H1 (cell line): ENCODE measurements at regions of chr5 and their contacts with region 1.

Region 1: DNA sequence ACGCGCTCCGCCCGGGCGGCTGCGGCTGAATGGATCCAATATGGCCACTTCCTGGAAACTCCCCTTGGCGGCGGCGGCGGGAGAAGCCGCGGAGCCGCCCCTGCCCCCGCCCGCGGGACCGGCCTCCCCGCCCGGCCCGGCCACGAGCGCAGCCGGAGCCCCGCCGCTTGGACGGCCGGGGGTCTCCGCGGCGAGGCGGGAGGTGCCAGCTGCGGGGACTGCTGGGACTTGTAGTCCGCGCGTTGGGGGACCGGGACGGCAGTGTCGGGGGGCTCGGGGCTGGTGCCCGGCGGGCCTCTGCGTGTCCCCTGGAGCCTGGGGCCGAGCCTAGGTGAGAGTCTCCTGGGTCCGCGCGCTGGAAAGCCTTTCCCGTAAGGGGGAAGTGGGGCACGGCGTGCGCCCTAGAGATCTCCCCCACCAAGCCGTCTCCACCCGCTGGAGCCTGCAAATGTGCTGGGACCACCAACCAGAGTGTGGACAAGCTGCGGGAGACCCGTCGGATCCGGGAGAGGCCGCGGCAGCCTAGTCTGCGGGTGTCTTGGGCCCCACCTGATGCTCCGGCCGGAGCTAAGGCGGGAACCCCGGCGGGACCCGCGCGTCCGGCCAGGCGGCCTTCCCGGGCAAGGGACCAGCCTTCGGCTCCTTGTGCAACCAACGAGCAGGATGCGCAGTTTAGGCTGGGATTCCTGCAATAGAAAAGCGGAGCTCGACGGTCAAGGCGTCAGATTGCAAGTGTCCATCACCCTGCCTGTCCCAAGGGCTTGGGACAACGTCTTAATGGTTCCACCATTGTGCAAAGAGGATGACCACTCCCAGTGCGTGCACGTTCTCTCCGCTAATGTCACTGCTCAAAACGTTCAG is at the start of gene SEPTIN8:
- DNase-seq: peak in 1 of 2 experiments; percentile 73
- H3K4me3 ChIP-seq: peak within 1 kb of the TSS; percentile 68 to 75 (median 73)
- H3K27ac ChIP-seq: no peak within 1 kb of the TSS
- H3K4me1 ChIP-seq: peaks cover 0 to 9% (median 2%) of the 10 kb centered on the region in 4 experiments; a peak in 5 of 7 replicates
- H3K27me3 ChIP-seq: peaks cover 2 to 51% (median 34%) of the 10 kb centered on the region in 4 experiments
- CTCF ChIP-seq: no peak
- EP300 ChIP-seq: no peak
- POLR2A ChIP-seq: no peak
- RAD21 ChIP-seq: no peak
- total RNA-seq, gene SEPTIN8: 33.0 and 33.8 TPM in 2 replicates

Region 2: GRCh38 chr5:132734687-132735086 is 42.8 kb before region 1 on chr5:
- CTCF ChIA-PET with region 1: no interaction called
- POLR2A ChIA-PET with region 1: no interaction called
- DNase-seq: no peak
- H3K4me3 ChIP-seq: no peak overlapping the region
- H3K27ac ChIP-seq: no peak overlapping the region
- H3K4me1 ChIP-seq: peaks cover 0 to 4% (median under 1%) of the 10 kb centered on the region in 4 experiments; a peak in 2 of 7 replicates
- H3K27me3 ChIP-seq: peaks cover 0 to 5% (median 0%) of the 10 kb centered on the region in 4 experiments; a peak in 1 of 7 replicates
- CTCF ChIP-seq: no peak
- EP300 ChIP-seq: no peak
- POLR2A ChIP-seq: no peak
- RAD21 ChIP-seq: no peak

Region 3: GRCh38 chr5:132746954-132747615 is 30.4 kb before region 1 on chr5 and contains the start of gene CCNI2:
- CTCF ChIA-PET with region 1: interaction called, 10 read pairs
- POLR2A ChIA-PET with region 1: interaction called, 3 read pairs
- DNase-seq: peak in 1 of 2 experiments; percentile 78
- H3K4me3 ChIP-seq: peak within 1 kb of the TSS; percentile 35 to 65 (median 46)
- H3K27ac ChIP-seq: no peak within 1 kb of the TSS
- H3K4me1 ChIP-seq: peaks cover 0 to 4% (median 0%) of the 10 kb centered on the region in 4 experiments; a peak in 2 of 7 replicates
- H3K27me3 ChIP-seq: peaks cover 23 to 45% (median 36%) of the 10 kb centered on the region in 4 experiments
- CTCF ChIP-seq: peak; percentile 71 to 80 (median 74)
- EP300 ChIP-seq: no peak
- POLR2A ChIP-seq: no peak
- RAD21 ChIP-seq: peak; percentile 66 to 76
- total RNA-seq, gene CCNI2: 1.4 TPM in 2 replicates

Region 4: DNA sequence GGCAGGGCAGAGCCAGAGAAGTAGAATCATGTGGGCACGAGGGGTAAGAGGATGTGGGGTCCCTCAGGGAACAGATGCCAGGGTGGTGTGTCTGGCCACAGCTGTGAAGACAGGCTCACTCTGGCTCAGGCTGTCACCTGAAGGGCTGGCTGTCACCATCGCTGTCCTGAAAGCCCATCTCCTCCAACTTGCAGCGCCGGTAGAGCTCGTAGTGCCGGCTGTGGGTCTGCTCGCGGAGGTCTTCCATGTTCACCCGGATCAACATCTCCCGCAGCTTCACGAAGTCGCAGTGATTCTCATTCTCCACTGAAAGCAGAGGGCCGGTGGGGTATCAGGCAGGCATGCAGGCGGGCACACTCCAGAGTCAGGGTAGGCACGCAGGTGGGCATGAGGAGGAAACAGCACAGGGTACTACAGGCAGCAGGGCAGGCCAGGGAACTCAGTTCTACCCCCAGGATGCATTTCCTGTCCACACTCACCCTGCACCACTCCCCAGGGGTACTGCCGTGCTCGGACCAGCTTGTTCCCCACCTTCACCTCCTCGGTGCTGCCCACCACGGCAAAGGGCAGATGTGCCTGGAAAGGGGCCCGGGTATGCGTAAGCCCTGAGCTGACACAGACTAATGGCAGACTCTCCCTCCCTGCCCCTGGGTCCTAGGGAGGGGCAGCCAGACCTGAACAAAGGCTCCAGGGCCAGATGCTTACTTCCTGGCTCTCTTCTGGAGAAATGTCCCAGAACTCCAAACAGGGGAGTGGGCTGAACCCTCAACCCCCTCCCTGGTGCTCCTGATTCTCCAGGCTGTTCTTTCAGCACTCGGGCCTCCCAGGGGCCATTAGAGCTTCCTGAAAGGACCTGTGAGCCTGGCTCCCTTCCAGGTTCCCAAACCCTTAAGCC is 15.9 kb before region 1 on chr5:
- CTCF ChIA-PET with region 1: interaction called, 58 read pairs
- POLR2A ChIA-PET with region 1: interaction called, 4 read pairs
- DNase-seq: no peak
- H3K4me3 ChIP-seq: no peak overlapping the region
- H3K27ac ChIP-seq: no peak overlapping the region
- H3K4me1 ChIP-seq: no peaks in the 10 kb centered on the region
- H3K27me3 ChIP-seq: no peaks in the 10 kb centered on the region
- CTCF ChIP-seq: no peak
- EP300 ChIP-seq: no peak
- POLR2A ChIP-seq: no peak
- RAD21 ChIP-seq: no peak

Region 5: GRCh38 chr5:132807163-132807838 is 29.9 kb after region 1 on chr5:
- CTCF ChIA-PET with region 1: interaction called, 11 read pairs
- POLR2A ChIA-PET with region 1: no interaction called
- DNase-seq: no peak
- H3K4me3 ChIP-seq: no peak overlapping the region
- H3K27ac ChIP-seq: no peak overlapping the region
- H3K4me1 ChIP-seq: peaks cover 0 to 5% (median 2%) of the 10 kb centered on the region in 4 experiments; a peak in 5 of 7 replicates
- H3K27me3 ChIP-seq: peaks cover 7 to 14% (median 11%) of the 10 kb centered on the region in 4 experiments
- CTCF ChIP-seq: peak; percentile 48 to 70 (median 61)
- EP300 ChIP-seq: no peak
- POLR2A ChIP-seq: no peak
- RAD21 ChIP-seq: peak; percentile 40 to 52